Endothelial cell of umbilical vein (primary cell): ENCODE measurements at regions of chr7 and their contacts with region 1.

Region 1: DNA sequence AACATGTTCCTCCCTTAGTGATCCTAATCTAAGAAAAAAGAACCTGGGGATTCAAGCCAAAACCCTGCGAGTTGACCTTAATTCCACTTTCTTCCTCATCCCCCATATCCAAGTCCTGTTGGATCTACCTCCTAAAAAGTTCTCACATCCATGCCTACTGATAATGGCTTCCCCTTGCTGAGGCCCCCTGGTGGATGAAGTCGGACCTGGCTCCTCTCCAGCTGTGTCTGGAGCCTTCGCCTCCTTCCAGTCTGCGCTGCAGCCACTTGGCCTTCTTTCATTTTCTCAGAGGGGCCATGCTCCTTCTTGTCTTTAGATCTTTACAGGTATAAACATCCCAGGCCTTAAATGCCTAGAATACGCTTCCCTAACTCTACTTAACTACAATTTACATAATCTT is 8.1 kb downstream of the PDE1C start:
- DNase-seq: peak; percentile 48
- H3K4me3 ChIP-seq: no peak overlapping the region
- H3K27ac ChIP-seq: no peak overlapping the region
- H3K4me1 ChIP-seq: no peaks in the 10 kb centered on the region
- H3K27me3 ChIP-seq: peaks cover 0 to 8% of the 10 kb centered on the region in 2 experiments
- CTCF ChIP-seq: peak; percentile 64 to 66
- POLR2A ChIP-seq: no peak

Region 2: GRCh38 chr7:31782411-31782991 is 279.6 kb before region 1 on chr7:
- CTCF ChIA-PET with region 1: interaction called, 5 read pairs
- POLR2A ChIA-PET with region 1: no interaction called
- dilution Hi-C with region 1: no loop called
- intact Hi-C with region 1: loop called (anchors 1 kb)
- DNase-seq: peak; percentile 69
- H3K4me3 ChIP-seq: no peak overlapping the region
- H3K27ac ChIP-seq: no peak overlapping the region
- H3K4me1 ChIP-seq: no peaks in the 10 kb centered on the region
- H3K27me3 ChIP-seq: no peaks in the 10 kb centered on the region
- CTCF ChIP-seq: peak; percentile 68 to 70
- POLR2A ChIP-seq: no peak

Region 3: DNA sequence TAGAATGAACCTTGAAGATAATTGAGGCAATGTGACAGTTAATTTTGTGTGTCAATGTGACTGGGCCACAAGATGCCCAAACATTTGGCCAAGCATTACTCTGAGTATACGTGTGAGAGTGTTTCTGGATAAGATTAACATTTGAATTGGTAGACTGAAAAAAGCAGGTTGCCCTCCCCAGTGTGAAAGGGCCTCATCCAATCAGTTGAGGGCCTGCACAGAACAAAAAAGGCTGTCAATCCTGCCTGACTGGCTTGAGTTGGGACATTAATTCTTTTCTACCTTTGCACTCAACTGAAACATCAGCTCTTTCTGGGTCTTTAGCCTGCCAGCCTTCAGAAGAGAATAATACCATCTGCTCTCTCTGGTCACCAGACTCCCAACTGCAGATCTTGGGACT is 64.7 kb after region 1 on chr7:
- CTCF ChIA-PET with region 1: no interaction called
- POLR2A ChIA-PET with region 1: no interaction called
- dilution Hi-C with region 1: no loop called
- intact Hi-C with region 1: loop called (anchors 2 kb)
- DNase-seq: no peak
- H3K4me3 ChIP-seq: no peak overlapping the region
- H3K27ac ChIP-seq: no peak overlapping the region
- H3K4me1 ChIP-seq: no peaks in the 10 kb centered on the region
- H3K27me3 ChIP-seq: no peaks in the 10 kb centered on the region
- CTCF ChIP-seq: no peak
- POLR2A ChIP-seq: no peak